ENCODE measurements at regions of chr18 and their contacts with region 1.

Region 1: DNA sequence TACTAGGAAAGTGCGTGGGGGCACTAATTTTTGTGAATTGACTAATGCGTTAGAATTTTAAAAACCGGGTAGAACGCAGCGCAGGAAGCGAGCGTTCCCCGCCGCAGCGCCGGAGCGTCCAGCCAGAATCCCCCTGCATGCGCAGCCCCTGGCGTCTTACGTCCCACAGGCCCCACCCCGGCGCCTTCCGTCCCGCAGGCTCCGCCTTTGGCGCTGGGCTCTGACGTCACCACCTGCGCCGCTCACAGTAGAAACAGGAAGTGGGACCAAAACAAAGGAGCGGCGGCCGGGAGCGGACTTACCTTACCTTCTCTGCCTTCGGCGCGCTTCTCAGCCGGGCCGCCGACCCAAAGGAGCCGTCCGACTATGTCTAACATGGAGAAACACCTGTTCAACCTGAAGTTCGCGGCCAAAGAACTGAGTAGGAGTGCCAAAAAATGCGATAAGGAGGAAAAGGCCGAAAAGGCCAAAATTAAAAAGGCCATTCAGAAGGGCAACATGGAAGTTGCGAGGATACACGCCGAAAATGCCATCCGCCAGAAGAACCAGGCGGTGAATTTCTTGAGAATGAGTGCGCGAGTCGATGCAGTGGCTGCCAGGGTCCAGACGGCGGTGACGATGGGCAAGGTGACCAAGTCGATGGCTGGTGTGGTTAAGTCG is at the start of gene CHMP1B:
- DNase-seq: peak; percentile 98
- H3K4me3 Mint-ChIP-seq: peak within 1 kb of the TSS; percentile 99
- H3K27ac Mint-ChIP-seq: peak within 1 kb of the TSS; percentile 99
- H3K4me1 Mint-ChIP-seq: peaks cover 29% of the 10 kb centered on the region
- H3K27me3 Mint-ChIP-seq: peaks cover 7% of the 10 kb centered on the region
- total RNA-seq, gene CHMP1B: 26.8 to 28.0 TPM

Region 2: GRCh38 chr18:11897781-11898180 is 46.5 kb after region 1 on chr18:
- CTCF ChIA-PET with region 1: no interaction called
- POLR2A ChIA-PET with region 1: no interaction called
- DNase-seq: no peak
- H3K4me3 Mint-ChIP-seq: no peak overlapping the region
- H3K27ac Mint-ChIP-seq: no peak overlapping the region
- H3K4me1 Mint-ChIP-seq: peaks cover 2% of the 10 kb centered on the region
- H3K27me3 Mint-ChIP-seq: no peaks in the 10 kb centered on the region

Region 3: GRCh38 chr18:11908182-11909060 is 57.1 kb after region 1 on chr18 and contains the start of gene MPPE1:
- CTCF ChIA-PET with region 1: no interaction called
- POLR2A ChIA-PET with region 1: interaction called, 13 read pairs
- DNase-seq: peak; percentile 89
- H3K4me3 Mint-ChIP-seq: peak within 1 kb of the TSS; percentile 86
- H3K27ac Mint-ChIP-seq: peak within 1 kb of the TSS; percentile 89
- H3K4me1 Mint-ChIP-seq: peaks cover 26% of the 10 kb centered on the region
- H3K27me3 Mint-ChIP-seq: no peaks in the 10 kb centered on the region
- total RNA-seq, gene MPPE1: 51.0 to 54.4 TPM

Region 4: GRCh38 chr18:12254136-12254829 is 403.0 kb after region 1 on chr18 and contains the start of gene CIDEA:
- CTCF ChIA-PET with region 1: no interaction called
- POLR2A ChIA-PET with region 1: no interaction called
- DNase-seq: no peak
- H3K4me3 Mint-ChIP-seq: no peak within 1 kb of the TSS
- H3K27ac Mint-ChIP-seq: no peak within 1 kb of the TSS
- H3K4me1 Mint-ChIP-seq: no peaks in the 10 kb centered on the region
- H3K27me3 Mint-ChIP-seq: peaks cover 64% of the 10 kb centered on the region
- total RNA-seq, gene CIDEA: not detected

Measured in activated CD4-positive, alpha-beta memory T cell treated with anti-CD3 and anti-CD28 coated beads, Interleukin-2, amount 10 ng/mL, durations not matched to agents 7 days and 5 days (primary cell).